A673 (cell line): ENCODE measurements at regions of chr4 and their contacts with region 1.

Region 1: DNA sequence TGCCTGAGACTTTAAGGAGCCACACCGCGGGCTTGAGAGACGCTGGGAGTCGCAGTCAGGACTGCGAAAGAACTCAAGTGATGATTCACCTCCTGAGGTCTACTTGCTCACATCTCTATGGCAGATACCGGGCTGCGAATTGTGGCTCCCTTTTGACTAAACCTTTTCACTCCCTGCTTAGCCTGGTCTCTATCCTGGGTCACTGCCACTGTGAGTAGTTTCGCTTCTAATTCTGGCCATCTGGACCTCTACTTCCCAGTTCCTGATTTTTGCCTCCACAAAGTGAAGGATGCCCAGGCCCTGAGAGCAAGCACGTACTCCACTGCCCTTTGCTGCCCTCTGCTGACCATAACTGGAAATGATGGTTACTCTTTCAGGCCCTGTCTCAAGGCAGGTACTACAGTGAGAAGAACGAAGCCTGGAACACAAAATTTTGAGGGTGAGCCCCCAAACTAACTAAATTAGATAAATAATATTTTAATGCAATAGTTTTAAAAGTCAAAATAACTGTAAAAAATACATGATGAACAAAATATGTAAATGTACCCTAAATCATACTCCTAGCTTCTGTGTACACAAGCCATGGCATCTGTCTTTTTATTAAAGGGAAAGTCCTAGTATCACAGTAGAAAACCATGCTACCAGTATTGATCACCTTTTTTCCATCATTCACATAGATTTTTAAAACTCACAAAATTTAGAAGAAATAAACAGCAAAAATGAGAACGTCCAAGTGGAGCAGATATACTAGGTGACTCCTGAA is 16.7 kb downstream of the MAD2L1 start:
- DNase-seq: peak; percentile 80
- H3K4me3 ChIP-seq: no peak overlapping the region
- H3K27ac ChIP-seq: no peak overlapping the region
- H3K4me1 ChIP-seq: peaks cover 18% of the 10 kb centered on the region
- H3K27me3 ChIP-seq: no peaks in the 10 kb centered on the region
- CTCF ChIP-seq: peak; percentile 82

Region 2: GRCh38 chr4:119314356-119314755 is 735.6 kb before region 1 on chr4:
- CTCF ChIA-PET with region 1: no interaction called
- POLR2A ChIA-PET with region 1: no interaction called
- intact Hi-C with region 1: loop called (anchors 2 kb)
- DNase-seq: peak; percentile 53
- H3K4me3 ChIP-seq: no peak overlapping the region
- H3K27ac ChIP-seq: no peak overlapping the region
- H3K4me1 ChIP-seq: no peaks in the 10 kb centered on the region
- H3K27me3 ChIP-seq: no peaks in the 10 kb centered on the region
- CTCF ChIP-seq: peak; percentile 54

Region 3: GRCh38 chr4:119559044-119559647 is 490.8 kb before region 1 on chr4:
- CTCF ChIA-PET with region 1: no interaction called
- POLR2A ChIA-PET with region 1: no interaction called
- intact Hi-C with region 1: loop called (anchors 1 kb)
- DNase-seq: peak; percentile 60
- H3K4me3 ChIP-seq: no peak overlapping the region
- H3K27ac ChIP-seq: no peak overlapping the region
- H3K4me1 ChIP-seq: no peaks in the 10 kb centered on the region
- H3K27me3 ChIP-seq: no peaks in the 10 kb centered on the region
- CTCF ChIP-seq: peak; percentile 61